ENCODE measurements at regions of chr19 and their contacts with region 1.

Region 1: GRCh38 chr19:47075179-47075810 is 26.9 kb upstream of the TMEM160 start:
- DNase-seq: no peak
- H3K4me3 ChIP-seq: no peak overlapping the region
- H3K27ac ChIP-seq: no peak overlapping the region
- H3K4me1 ChIP-seq: peaks cover 3 to 7% (median 5%) of the 10 kb centered on the region in 4 donors
- H3K27me3 ChIP-seq: no peaks in the 10 kb centered on the region
- CTCF ChIP-seq: no peak
- EP300 ChIP-seq: no peak
- POLR2A ChIP-seq: no peak

Region 2: GRCh38 chr19:47028195-47028601 is 47.1 kb before region 1 on chr19:
- in situ Hi-C with region 1: no loop called
- intact Hi-C with region 1: loop called (anchors 1 kb)
- DNase-seq: no peak
- H3K4me3 ChIP-seq: no peak overlapping the region
- H3K27ac ChIP-seq: no peak overlapping the region
- H3K4me1 ChIP-seq: peaks cover 0 to 2% (median under 1%) of the 10 kb centered on the region in 4 donors
- H3K27me3 ChIP-seq: peaks cover 92% of the 10 kb centered on the region
- CTCF ChIP-seq: no peak
- EP300 ChIP-seq: no peak
- POLR2A ChIP-seq: no peak

Region 3: GRCh38 chr19:47124937-47125668 is 49.8 kb after region 1 on chr19:
- in situ Hi-C with region 1: loop called (anchors 5 to 10 kb)
- intact Hi-C with region 1: loop called (anchors 5 kb)
- DNase-seq: no peak
- H3K4me3 ChIP-seq: no peak overlapping the region
- H3K27ac ChIP-seq: peak overlapping the region in 3 of 4 donors; percentile 25 to 49 (median 29)
- H3K4me1 ChIP-seq: peaks cover 0 to 9% (median 5%) of the 10 kb centered on the region in 4 donors
- H3K27me3 ChIP-seq: no peaks in the 10 kb centered on the region
- CTCF ChIP-seq: peak; percentile 70 to 93 (median 83)
- EP300 ChIP-seq: no peak
- POLR2A ChIP-seq: no peak